Ovary (tissue), 10 donors: ENCODE measurements at regions of chr1 and their contacts with region 1.

Region 1: DNA sequence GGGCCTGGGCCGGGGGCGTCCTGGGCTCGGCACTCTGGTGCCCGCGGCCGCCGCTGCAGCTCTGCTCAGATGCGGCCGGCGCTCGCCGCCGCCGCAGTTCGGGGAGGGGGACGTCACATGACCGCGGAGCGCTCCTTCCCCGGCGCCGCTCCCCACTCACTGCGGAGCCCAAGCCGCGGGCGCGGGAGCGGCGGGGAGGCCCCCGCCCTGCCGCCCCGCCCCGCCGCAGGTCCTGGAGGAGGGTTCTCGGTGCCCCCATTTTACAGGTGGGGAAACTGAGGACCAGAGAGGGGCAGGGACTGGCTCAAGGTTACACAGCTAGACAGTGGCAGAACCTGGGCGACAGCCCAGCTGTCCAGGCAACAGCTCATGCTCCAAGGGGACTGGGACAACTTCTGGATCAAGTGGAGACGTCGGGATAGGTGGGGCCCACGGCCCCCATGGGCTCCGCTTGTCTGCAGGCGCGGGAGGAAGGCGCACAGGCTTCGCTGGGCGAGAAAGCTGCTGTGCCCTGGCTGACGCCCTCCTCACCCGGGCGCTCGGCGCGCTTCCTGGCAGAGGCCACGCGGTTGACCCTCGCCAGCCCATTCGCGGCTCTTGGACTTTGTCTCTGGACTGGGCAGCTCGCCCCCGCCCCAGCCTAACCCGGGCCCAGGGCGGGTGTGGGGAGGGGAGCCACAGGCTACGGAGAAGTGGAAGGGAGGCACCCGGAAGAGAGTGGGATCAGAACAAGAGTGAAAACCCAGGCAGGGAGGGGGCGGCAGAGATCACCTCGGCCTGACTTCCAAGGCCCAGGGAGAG is at the start of gene RAP1GAP:
- DNase-seq: no peak
- H3K4me3 ChIP-seq: peak within 1 kb of the TSS; percentile 12
- H3K27ac ChIP-seq: no peak within 1 kb of the TSS
- H3K4me1 ChIP-seq: peaks cover 17% of the 10 kb centered on the region
- H3K27me3 ChIP-seq: no peaks in the 10 kb centered on the region
- CTCF ChIP-seq: no peak
- EP300 ChIP-seq: no peak
- POLR2A ChIP-seq: no peak
- total RNA-seq, gene RAP1GAP: 0.60 to 9.4 (median 2.8) TPM

Region 2: DNA sequence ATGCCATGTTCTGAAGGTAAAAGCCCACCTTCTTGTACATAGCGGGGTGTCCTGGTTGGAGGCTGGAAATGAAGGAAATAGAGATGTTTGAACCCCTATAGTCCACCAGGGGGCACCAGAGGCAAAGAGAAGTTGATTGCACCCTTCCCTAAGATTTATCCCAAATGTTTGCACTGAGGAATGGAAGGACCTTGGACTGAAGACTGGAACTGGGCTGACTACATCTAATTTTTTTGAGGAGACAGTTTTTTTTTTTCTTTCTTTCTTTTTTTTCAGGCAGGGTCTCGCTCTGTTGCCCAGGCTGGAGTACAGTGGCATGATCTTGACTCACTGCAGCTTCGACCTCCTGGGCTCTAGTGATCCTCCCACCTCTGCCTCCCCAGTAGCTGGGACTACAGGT is 437.4 kb before region 1 on chr1:
- intact Hi-C with region 1: loop called in 2 of 4 experiments (anchors 5 to 10 kb)
- DNase-seq: peak in 2 of 5 donors; percentile 40 to 63
- H3K4me3 ChIP-seq: no peak overlapping the region
- H3K27ac ChIP-seq: no peak overlapping the region
- H3K4me1 ChIP-seq: no peaks in the 10 kb centered on the region
- H3K27me3 ChIP-seq: no peaks in the 10 kb centered on the region
- CTCF ChIP-seq: peak; percentile 48 to 86 (median 73)
- EP300 ChIP-seq: no peak
- POLR2A ChIP-seq: no peak

Region 3: DNA sequence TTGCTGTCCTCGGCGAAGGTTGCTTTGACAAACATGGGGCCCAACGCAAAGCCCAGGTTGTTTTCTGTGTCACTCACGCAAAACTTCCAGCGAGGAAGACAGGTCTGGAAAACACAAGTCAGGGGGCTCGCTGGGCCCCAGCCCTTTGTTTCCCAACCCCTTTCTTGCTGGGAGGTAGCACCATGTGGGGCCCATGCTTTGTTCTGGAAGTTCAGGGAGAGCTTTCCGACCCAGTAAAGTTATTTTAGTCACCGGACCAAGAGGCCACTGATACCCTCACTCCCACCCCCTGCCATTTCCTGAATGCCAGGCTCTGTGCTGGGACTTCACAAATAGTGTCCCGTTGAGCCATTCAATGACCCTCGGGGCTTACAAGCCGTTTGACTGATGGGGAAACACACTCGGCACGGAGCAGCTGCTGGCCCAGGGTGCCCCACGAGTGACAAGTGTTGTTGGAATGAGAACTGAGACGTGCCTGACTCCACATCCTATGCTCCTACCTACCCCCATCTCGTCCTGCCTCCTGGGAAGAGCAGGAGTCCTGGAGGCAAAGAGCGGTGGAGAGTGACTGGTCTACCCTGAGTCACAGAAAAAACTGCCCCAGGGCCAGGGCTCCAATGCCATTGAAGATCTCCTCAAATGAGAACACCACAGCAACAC is 431.2 kb before region 1 on chr1:
- intact Hi-C with region 1: loop called in 2 of 4 experiments (anchors 5 to 10 kb)
- DNase-seq: no peak
- H3K4me3 ChIP-seq: no peak overlapping the region
- H3K27ac ChIP-seq: no peak overlapping the region
- H3K4me1 ChIP-seq: no peaks in the 10 kb centered on the region
- H3K27me3 ChIP-seq: no peaks in the 10 kb centered on the region
- CTCF ChIP-seq: no peak
- EP300 ChIP-seq: no peak
- POLR2A ChIP-seq: no peak

Region 4: DNA sequence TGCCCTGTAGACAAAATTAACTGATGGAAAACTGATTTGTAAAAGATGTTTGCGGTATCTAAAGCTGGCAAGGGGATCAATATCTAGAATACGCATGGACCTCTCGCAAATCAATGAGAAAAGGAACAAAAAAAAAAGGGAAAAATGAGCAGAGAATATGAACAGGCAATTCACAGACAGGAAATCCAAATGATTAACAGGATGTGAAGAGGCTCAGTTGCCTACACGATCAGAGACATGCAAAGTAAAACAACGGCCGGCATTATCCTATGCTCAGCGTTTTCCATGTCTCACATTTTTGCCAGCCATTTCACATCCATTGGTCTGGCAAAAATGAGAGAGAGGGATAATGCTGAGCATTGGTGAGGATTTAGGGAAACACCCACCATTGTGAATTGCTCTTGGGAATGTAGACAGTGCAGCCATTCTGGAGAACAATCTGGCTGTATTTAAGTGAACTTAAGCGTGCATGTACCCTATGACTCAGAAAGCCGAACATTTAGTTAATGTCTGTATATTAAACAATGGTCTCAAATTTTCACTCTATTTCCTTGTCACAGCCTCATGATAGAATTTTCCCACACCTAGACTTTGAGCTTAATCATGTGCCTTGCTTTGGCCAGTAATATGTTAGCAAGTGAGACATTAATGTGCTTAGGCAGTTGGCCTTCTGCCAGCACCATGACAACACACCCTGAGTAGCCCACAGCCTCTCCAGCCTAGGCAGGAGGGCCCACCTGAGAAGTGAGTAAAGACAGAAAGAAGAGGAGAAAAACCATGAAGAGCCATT is 290.6 kb before region 1 on chr1:
- intact Hi-C with region 1: loop called in 1 of 4 experiments (anchors 10 kb)
- DNase-seq: no peak
- H3K4me3 ChIP-seq: no peak overlapping the region
- H3K27ac ChIP-seq: no peak overlapping the region
- H3K4me1 ChIP-seq: no peaks in the 10 kb centered on the region
- H3K27me3 ChIP-seq: no peaks in the 10 kb centered on the region
- CTCF ChIP-seq: no peak
- EP300 ChIP-seq: no peak
- POLR2A ChIP-seq: no peak

Region 5: GRCh38 chr1:22077728-22078127 is 408.3 kb after region 1 on chr1:
- intact Hi-C with region 1: no loop called
- DNase-seq: no peak
- H3K4me3 ChIP-seq: no peak overlapping the region
- H3K27ac ChIP-seq: no peak overlapping the region
- H3K4me1 ChIP-seq: peaks cover 12% of the 10 kb centered on the region
- H3K27me3 ChIP-seq: no peaks in the 10 kb centered on the region
- CTCF ChIP-seq: no peak
- EP300 ChIP-seq: no peak
- POLR2A ChIP-seq: no peak